Upper lobe of right lung (tissue), 1 donor: ENCODE measurements at regions of chr10 and their contacts with region 1.

Region 1: GRCh38 chr10:124539935-124540641 is 78.5 kb downstream of the LHPP start:
- DNase-seq: peak; percentile 74
- ATAC-seq: peak; percentile 74
- H3K4me3 ChIP-seq: no peak overlapping the region
- H3K27ac ChIP-seq: no peak overlapping the region
- H3K4me1 ChIP-seq: no peaks in the 10 kb centered on the region
- H3K27me3 ChIP-seq: no peaks in the 10 kb centered on the region
- CTCF ChIP-seq: peak; percentile 71

Region 2: DNA sequence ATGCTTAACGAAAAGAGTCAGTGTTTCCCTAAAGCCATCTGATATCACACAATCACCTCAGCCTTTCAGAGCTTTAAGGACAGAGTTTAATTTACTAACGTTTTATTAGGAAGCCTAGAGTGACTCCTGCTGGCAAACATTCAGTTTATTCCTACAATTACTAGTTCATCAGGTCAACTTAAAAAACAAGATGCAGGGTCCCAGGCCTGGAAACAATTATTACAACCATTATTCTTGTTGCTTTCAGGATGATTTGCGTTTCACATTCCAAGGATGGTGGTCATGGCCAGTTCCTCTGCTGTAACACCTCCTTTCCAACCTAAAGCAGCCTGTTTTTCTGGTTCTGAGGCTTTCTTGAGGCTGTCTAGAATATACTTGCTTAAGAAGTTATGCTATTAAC is 205.6 kb after region 1 on chr10:
- intact Hi-C with region 1: loop called (anchors 5 kb)
- DNase-seq: no peak
- ATAC-seq: peak; percentile 7
- H3K4me3 ChIP-seq: no peak overlapping the region
- H3K27ac ChIP-seq: peak overlapping the region; percentile 88
- H3K4me1 ChIP-seq: peaks cover 29% of the 10 kb centered on the region
- H3K27me3 ChIP-seq: no peaks in the 10 kb centered on the region
- CTCF ChIP-seq: peak; percentile 50

Region 3: DNA sequence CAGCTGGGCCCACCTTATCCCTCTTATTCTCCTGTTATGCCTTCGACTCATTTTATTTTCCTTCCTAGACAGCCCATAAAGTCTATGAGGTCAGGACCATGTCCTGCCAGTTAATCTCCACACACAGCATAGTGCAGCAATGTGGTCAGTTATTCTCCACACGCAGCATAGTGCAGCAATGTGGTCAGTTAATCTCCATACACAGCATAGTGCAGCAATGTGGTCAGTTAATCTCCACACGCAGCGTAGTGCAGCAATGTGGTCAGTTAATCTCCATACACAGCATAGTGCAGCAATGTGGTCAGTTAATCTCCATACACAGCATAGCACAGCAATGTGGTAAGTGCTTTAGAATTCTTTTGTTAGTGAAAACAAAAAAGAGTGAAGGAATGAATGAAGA is 1065.1 kb after region 1 on chr10:
- intact Hi-C with region 1: no loop called
- DNase-seq: no peak
- ATAC-seq: no peak
- H3K4me3 ChIP-seq: no peak overlapping the region
- H3K27ac ChIP-seq: no peak overlapping the region
- H3K4me1 ChIP-seq: no peaks in the 10 kb centered on the region
- H3K27me3 ChIP-seq: no peaks in the 10 kb centered on the region
- CTCF ChIP-seq: no peak